ENCODE measurements at regions of chr7 and their contacts with region 1.

Region 1: GRCh38 chr7:36291387-36292316 is 98.0 kb upstream of the ANLN start:
- DNase-seq: peak; percentile 37 to 78 (median 68)
- ATAC-seq: peak; percentile 76
- H3K4me3 ChIP-seq: peak overlapping the region; percentile 38
- H3K4me3 Mint-ChIP-seq: peak overlapping the region; percentile 54 to 83 (median 73)
- H3K27ac ChIP-seq: no peak overlapping the region
- H3K27ac Mint-ChIP-seq: peak overlapping the region in 8 of 9 donors; percentile 3 to 83 (median 50)
- H3K4me1 ChIP-seq: peaks cover 26% of the 10 kb centered on the region in 2 donors
- H3K4me1 Mint-ChIP-seq: peaks cover 29 to 47% (median 40%) of the 10 kb centered on the region in 7 donors
- H3K27me3 ChIP-seq: no peaks in the 10 kb centered on the region
- H3K27me3 Mint-ChIP-seq: no peaks in the 10 kb centered on the region

Region 2: DNA sequence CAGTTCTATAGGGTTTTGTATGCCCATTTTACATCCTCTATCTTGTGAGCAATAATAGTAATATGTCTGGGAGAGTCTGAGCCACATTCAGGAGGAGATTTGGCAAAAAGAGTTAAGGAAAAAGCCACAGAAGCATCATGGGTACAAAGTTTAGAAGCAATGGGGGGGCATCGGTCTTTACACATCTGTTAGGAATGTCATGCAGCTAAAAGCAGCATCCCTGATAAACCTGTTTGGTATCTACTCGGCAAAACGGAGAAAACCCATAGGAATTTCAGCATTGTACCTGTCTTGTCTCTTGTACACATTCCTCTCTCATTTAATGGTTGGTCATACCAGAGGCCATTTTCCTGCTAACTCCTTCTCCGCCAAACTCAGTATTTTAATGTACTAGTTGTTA is 584.2 kb before region 1 on chr7:
- CTCF ChIA-PET with region 1: no interaction called
- POLR2A ChIA-PET with region 1: no interaction called
- intact Hi-C with region 1: loop called in 1 of 2 experiments (anchors 5 kb)
- DNase-seq: no peak
- ATAC-seq: no peak
- H3K4me3 ChIP-seq: no peak overlapping the region
- H3K4me3 Mint-ChIP-seq: no peak overlapping the region
- H3K27ac ChIP-seq: no peak overlapping the region
- H3K27ac Mint-ChIP-seq: peak overlapping the region in 1 of 9 donors; percentile 15
- H3K4me1 ChIP-seq: peaks cover 8% of the 10 kb centered on the region in 2 donors
- H3K4me1 Mint-ChIP-seq: peaks cover 5 to 30% (median 21%) of the 10 kb centered on the region in 7 donors
- H3K27me3 ChIP-seq: no peaks in the 10 kb centered on the region
- H3K27me3 Mint-ChIP-seq: peaks cover 0 to 21% (median 0%) of the 10 kb centered on the region in 5 donors

Region 3: DNA sequence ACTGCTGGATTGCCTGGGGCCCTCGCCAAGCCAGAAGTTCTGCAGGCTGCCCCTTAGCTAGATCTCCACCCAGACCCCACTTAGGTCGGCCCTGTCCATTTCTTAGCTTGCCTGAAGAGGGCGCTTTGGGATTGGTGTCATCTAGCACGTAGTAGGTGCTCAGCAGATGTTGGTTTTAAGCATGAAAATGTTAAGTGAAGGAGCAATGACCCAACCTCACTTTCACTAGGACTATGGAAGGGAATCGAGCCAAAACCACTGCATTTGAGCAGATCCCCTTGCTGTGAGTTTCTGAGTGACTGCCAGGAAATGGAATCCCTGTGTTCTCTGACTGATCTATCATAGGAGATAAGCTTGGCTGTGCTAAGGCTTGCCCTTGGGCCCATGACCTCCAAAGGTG is 270.3 kb before region 1 on chr7:
- CTCF ChIA-PET with region 1: interaction called, 4 read pairs
- POLR2A ChIA-PET with region 1: no interaction called
- intact Hi-C with region 1: loop called in 1 of 2 experiments (anchors 1 kb)
- DNase-seq: peak in 1 of 9 donors; percentile 3
- ATAC-seq: no peak
- H3K4me3 ChIP-seq: no peak overlapping the region
- H3K4me3 Mint-ChIP-seq: no peak overlapping the region
- H3K27ac ChIP-seq: no peak overlapping the region
- H3K27ac Mint-ChIP-seq: no peak overlapping the region
- H3K4me1 ChIP-seq: no peaks in the 10 kb centered on the region
- H3K4me1 Mint-ChIP-seq: peaks cover 0 to 2% (median 0%) of the 10 kb centered on the region in 7 donors
- H3K27me3 ChIP-seq: no peaks in the 10 kb centered on the region
- H3K27me3 Mint-ChIP-seq: peaks cover 0 to 17% (median 0%) of the 10 kb centered on the region in 5 donors

Region 4: DNA sequence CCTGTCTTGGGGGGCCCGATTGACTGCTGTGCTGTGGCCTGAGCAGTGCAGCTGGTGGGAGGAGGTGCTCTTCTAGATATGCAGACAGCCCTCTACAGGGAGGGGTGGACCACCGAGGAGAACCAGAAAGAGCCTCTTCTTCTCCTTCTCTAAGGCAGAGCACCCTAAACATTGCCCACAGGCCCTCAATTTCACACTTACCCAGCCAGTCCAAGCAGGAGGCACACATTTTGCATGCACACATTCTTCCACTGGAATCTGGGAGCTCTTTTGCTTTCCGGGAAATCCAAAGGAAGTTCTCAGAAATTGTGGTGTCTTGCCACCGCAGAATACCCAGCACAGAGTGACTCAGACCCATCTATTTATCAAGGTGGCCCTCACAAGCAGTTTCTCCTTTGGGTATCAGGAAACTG is 92.8 kb before region 1 on chr7:
- CTCF ChIA-PET with region 1: no interaction called
- POLR2A ChIA-PET with region 1: no interaction called
- intact Hi-C with region 1: no loop called
- DNase-seq: no peak
- ATAC-seq: peak; percentile 24
- H3K4me3 ChIP-seq: no peak overlapping the region
- H3K4me3 Mint-ChIP-seq: no peak overlapping the region
- H3K27ac ChIP-seq: no peak overlapping the region
- H3K27ac Mint-ChIP-seq: peak overlapping the region in 1 of 9 donors; percentile 36
- H3K4me1 ChIP-seq: peaks cover 0 to 10% of the 10 kb centered on the region in 2 donors
- H3K4me1 Mint-ChIP-seq: peaks cover 6 to 27% (median 18%) of the 10 kb centered on the region in 7 donors
- H3K27me3 ChIP-seq: no peaks in the 10 kb centered on the region
- H3K27me3 Mint-ChIP-seq: no peaks in the 10 kb centered on the region

Region 5: DNA sequence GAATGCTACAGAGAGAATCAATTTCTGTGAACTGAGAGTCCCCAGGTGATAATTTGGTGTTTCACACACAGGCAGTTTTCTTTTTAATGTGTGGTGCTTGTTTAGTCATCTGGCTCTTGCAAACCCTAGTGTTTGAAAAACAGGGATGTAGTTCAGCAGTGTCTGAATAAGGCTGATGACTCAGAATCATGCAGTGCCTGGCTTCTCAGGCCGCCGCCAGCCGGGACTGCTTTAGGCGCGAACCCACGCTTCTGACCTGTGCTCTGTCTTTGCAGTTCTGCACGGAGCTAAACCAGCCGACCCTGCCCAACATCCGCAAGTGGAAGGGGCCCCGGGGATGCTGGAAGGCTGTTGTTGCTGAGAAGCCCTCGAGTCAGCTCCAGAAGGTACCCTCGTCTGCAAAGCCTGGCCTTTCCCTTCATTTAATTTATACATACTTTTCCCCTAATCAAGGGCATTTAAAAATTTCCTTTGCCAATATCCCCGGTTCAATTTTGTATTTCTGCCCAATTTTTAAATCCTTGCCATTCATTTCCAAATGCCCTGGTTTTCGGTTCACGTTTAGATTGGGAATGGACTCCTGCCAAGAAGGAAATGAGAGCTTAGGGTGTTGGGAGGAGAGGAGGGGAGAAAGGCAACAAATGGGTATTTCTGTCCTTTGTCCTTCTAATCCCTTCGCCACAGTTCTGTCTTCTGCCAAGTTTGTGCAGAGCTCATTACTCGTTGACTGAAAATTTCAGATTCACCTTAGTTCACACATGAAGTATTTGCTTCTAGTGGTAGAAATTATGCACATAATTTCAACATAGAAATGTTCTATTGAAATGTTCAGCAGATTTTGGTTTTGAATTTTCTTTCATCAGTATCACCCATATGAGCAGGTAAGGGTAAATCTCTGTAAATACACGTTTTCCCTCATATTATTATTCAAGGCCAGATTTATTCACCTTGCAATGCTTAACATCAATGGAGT is 10.5 kb before region 1 on chr7:
- CTCF ChIA-PET with region 1: interaction called, 5 read pairs
- POLR2A ChIA-PET with region 1: interaction called, 16 read pairs
- intact Hi-C with region 1: no loop called
- DNase-seq: no peak
- ATAC-seq: peak; percentile 26
- H3K4me3 ChIP-seq: no peak overlapping the region
- H3K4me3 Mint-ChIP-seq: no peak overlapping the region
- H3K27ac ChIP-seq: no peak overlapping the region
- H3K27ac Mint-ChIP-seq: peak overlapping the region in 1 of 9 donors; percentile 34
- H3K4me1 ChIP-seq: peaks cover 18 to 33% of the 10 kb centered on the region in 2 donors
- H3K4me1 Mint-ChIP-seq: peaks cover 21 to 39% (median 31%) of the 10 kb centered on the region in 7 donors
- H3K27me3 ChIP-seq: no peaks in the 10 kb centered on the region
- H3K27me3 Mint-ChIP-seq: peaks cover 0 to 9% (median 0%) of the 10 kb centered on the region in 5 donors

Region 6: DNA sequence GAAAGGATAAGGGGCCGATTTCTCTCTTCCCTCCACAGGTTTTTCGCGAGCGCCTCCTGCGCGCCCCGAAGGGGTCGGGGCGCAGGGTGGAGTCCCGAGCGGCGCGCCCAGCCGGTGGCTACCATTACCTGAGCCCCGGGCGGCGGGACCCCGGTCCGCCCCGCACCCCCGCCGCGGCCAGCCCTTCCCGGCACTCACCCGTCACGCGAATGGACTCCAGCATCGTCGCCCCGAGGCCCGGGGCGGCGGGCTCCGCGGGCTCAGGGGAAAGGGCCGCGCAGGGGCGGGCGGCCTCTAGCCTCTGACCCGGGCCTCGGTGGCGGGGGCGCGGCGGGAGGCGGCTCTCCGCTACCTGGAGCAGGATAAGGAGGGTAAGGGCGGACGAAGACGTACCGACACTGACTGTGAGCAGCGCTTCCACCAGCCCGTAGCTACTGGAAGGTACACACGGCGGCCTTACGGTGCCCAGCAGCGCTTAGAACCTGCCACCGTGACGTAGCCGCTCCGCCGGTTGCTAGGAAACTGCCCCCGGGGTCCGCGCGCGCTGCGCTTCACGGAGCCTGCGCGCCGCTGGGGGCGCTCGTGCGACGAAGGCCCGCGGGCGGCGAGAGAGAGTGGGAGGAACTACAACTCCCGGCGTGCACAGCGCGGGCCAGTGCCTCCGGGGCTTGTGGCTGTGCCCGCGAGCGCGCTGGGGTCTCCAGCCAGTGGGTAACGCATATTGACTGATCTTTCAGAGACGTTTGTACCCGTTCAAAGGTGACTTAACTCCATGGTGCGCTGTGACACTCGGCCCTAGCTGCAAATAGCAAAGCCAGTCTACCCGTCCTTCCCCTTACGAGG is 75.3 kb after region 1 on chr7:
- CTCF ChIA-PET with region 1: no interaction called
- POLR2A ChIA-PET with region 1: no interaction called
- intact Hi-C with region 1: loop called in 1 of 2 experiments (anchors 2 kb)
- DNase-seq: peak; percentile 84 to 92 (median 91)
- ATAC-seq: peak; percentile 98
- H3K4me3 ChIP-seq: peak overlapping the region; percentile 76
- H3K4me3 Mint-ChIP-seq: peak overlapping the region; percentile 80 to 97 (median 93)
- H3K27ac ChIP-seq: peak overlapping the region; percentile 70
- H3K27ac Mint-ChIP-seq: peak overlapping the region in 8 of 9 donors; percentile 51 to 94 (median 82)
- H3K4me1 ChIP-seq: peaks cover 0 to 5% of the 10 kb centered on the region in 2 donors
- H3K4me1 Mint-ChIP-seq: peaks cover 0 to 8% (median 5%) of the 10 kb centered on the region in 7 donors
- H3K27me3 ChIP-seq: no peaks in the 10 kb centered on the region
- H3K27me3 Mint-ChIP-seq: peaks cover 0 to 57% (median 0%) of the 10 kb centered on the region in 5 donors

Measured in naive thymus-derived CD4-positive, alpha-beta T cell (primary cell).